B cell (primary cell): ENCODE measurements at regions of chr19 and their contacts with region 1.

Region 1: DNA sequence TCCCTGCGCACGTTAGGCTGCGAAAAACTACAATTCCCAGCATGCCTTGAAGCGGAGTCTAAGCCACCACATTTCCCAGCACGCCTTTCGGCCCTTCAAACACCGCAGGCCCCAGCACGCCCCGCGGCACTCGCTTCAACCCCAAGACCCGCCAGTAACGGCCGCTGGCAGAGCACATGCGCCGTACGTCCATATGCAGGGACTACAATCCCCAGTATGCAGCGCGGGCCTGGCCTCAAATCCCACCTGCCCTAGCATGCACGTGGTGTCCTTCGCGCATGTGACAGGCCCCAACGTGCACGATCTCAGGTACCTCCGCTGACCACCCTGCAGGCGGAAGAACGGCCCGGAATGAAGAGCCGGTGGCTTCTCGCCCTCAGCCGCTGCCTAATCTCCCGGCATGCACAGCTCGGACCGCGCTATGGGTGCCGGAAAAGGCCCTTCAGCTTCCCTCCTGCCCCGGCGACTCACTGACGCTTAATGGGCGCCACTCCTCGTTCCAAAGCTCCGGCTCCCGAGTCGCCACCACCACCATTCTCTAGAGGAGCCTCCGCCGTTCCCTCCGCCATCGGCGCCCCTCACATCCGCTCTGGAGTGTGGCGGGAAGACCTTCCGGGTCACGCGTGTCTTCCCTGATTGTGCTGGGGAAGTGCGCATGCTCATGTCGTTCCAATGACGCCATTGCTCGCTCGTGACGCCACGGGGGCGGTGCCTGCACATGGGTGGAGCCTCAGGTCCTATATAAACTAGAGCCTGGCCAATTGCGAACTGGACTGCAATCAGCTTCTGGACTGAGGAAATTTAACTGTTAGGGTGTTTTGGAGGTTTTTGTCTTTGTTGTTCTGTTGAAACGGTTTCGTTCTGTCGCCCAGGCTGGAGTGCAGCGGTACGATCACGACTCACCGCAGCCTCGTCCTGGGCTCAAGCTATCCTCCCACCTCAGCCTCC is at the start of gene DUS3L:
- DNase-seq: peak; percentile 97
- ATAC-seq: peak; percentile 92
- H3K4me3 ChIP-seq: peak within 1 kb of the TSS; percentile 67 to 91 (median 87)
- H3K4me3 Mint-ChIP-seq: peak within 1 kb of the TSS; percentile 98
- H3K27ac ChIP-seq: peak within 1 kb of the TSS; percentile 97 to 98
- H3K27ac Mint-ChIP-seq: peak within 1 kb of the TSS; percentile 100
- H3K4me1 ChIP-seq: peaks cover 5 to 16% of the 10 kb centered on the region in 2 donors
- H3K4me1 Mint-ChIP-seq: peaks cover 10% of the 10 kb centered on the region
- H3K27me3 ChIP-seq: peaks cover 0 to 6% (median 0%) of the 10 kb centered on the region in 4 experiments
- H3K27me3 Mint-ChIP-seq: no peaks in the 10 kb centered on the region
- CTCF ChIP-seq: no peak
- total RNA-seq, gene DUS3L: 79.0 and 84.6 TPM in 2 replicates

Region 2: GRCh38 chr19:5680437-5681368 is 110.1 kb before region 1 on chr19 and contains the starts of genes HSD11B1L and MICOS13:
- CTCF ChIA-PET with region 1: interaction called, 3 read pairs
- POLR2A ChIA-PET with region 1: interaction called, 3 read pairs
- intact Hi-C with region 1: loop called (anchors 1 kb)
- DNase-seq: peak; percentile 100
- ATAC-seq: peak; percentile 93
- H3K4me3 ChIP-seq: peak within 1 kb of the TSS; percentile 65 to 100 (median 81)
- H3K4me3 Mint-ChIP-seq: peak within 1 kb of the TSS; percentile 93
- H3K27ac ChIP-seq: peak within 1 kb of the TSS; percentile 96 to 98
- H3K27ac Mint-ChIP-seq: peak within 1 kb of the TSS; percentile 99
- H3K4me1 ChIP-seq: peaks cover 14 to 17% of the 10 kb centered on the region in 2 donors
- H3K4me1 Mint-ChIP-seq: peaks cover 25% of the 10 kb centered on the region
- H3K27me3 ChIP-seq: no peaks in the 10 kb centered on the region
- H3K27me3 Mint-ChIP-seq: no peaks in the 10 kb centered on the region
- CTCF ChIP-seq: no peak
- total RNA-seq, gene HSD11B1L: 1.4 and 1.8 TPM in 2 replicates
- total RNA-seq, gene MICOS13: 30.8 and 34.5 TPM in 2 replicates

Region 3: DNA sequence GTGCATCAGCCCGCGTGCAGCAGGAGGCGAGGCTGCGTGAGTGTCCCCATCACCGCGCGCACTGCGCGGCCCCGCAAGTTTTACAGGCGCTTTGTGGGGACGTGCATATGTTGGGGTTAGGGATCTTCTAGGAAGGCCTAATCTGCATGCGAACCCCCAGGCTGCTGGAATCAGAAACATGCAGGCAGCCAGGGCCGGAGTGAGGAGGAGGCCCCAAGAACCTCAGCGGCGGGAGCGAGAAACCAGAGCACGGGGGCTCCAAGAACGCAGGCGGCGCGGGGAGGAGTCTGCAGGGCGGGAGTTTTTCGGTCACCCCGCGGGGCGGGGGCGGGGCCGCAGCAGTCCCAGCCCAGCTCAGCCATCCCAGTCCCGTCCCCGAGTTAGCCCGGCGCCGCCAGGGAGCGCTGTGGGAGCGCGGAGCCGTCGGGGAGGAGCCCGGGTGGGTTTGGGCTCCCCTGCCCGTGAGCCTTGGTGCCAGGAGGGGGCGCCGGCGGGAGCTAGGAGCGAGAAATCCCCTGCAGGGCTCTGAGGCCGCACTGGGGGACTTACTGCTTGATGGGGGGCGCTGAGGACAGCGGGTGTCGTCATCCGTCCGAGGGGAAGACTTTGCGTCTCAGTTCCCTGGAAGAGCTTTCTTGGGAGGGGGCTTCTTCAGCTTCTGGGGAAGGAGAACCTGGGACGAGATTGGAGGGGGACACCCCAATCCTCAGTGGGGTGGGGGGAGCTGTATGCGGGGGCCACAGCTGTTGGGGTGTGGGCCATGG is 13.1 kb after region 1 on chr19:
- CTCF ChIA-PET with region 1: interaction called, 16 read pairs
- POLR2A ChIA-PET with region 1: interaction called, 5 read pairs
- intact Hi-C with region 1: loop called (anchors 1 kb)
- DNase-seq: peak; percentile 92
- ATAC-seq: peak; percentile 91
- H3K4me3 ChIP-seq: peak overlapping the region in 4 of 5 experiments; percentile 7 to 55 (median 42)
- H3K4me3 Mint-ChIP-seq: peak overlapping the region; percentile 76
- H3K27ac ChIP-seq: peak overlapping the region in 1 of 2 donors; percentile 53
- H3K27ac Mint-ChIP-seq: peak overlapping the region; percentile 50
- H3K4me1 ChIP-seq: peaks cover 20 to 27% of the 10 kb centered on the region in 2 donors
- H3K4me1 Mint-ChIP-seq: peaks cover 22% of the 10 kb centered on the region
- H3K27me3 ChIP-seq: peaks cover 0 to 66% (median 29%) of the 10 kb centered on the region in 4 experiments
- H3K27me3 Mint-ChIP-seq: peaks cover 26% of the 10 kb centered on the region
- CTCF ChIP-seq: peak; percentile 85

Region 4: DNA sequence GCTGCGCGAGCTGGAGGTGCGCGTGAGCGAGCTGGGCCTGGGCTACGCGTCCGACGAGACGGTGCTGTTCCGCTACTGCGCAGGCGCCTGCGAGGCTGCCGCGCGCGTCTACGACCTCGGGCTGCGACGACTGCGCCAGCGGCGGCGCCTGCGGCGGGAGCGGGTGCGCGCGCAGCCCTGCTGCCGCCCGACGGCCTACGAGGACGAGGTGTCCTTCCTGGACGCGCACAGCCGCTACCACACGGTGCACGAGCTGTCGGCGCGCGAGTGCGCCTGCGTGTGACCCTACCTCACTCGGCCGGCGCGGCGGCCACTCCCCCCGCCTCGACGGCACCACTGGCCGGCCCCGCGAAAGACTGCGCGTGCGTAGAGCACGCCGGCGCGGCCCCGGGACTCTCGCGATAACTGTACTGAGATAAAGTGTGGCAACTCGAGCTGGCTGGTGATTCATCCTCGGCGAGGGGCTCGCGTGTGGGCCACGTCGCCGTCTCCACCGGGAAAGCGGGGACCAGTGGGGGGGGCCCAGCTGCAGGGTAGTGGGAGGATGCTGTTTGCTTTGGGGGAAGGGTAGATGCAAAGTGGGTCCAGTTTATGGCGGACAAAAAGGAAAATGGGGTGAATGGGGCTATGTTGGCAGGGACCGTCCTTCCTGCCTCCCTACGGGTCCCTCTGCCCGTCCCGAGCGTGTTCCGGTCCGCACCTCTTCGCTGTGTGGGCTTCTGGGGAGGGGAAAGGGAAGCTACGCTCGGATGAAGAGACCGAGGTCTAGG is 37.2 kb after region 1 on chr19:
- CTCF ChIA-PET with region 1: interaction called, 6 read pairs
- POLR2A ChIA-PET with region 1: no interaction called
- intact Hi-C with region 1: loop called (anchors 1 kb)
- DNase-seq: peak; percentile 91
- ATAC-seq: peak; percentile 79
- H3K4me3 ChIP-seq: peak overlapping the region; percentile 36 to 75 (median 59)
- H3K4me3 Mint-ChIP-seq: peak overlapping the region; percentile 92
- H3K27ac ChIP-seq: peak overlapping the region; percentile 34 to 67
- H3K27ac Mint-ChIP-seq: peak overlapping the region; percentile 93
- H3K4me1 ChIP-seq: peaks cover 16 to 30% of the 10 kb centered on the region in 2 donors
- H3K4me1 Mint-ChIP-seq: peaks cover 19% of the 10 kb centered on the region
- H3K27me3 ChIP-seq: peaks cover 0 to 28% (median 7%) of the 10 kb centered on the region in 4 experiments
- H3K27me3 Mint-ChIP-seq: peaks cover 4% of the 10 kb centered on the region
- CTCF ChIP-seq: no peak

Region 5: GRCh38 chr19:5947435-5947834 is 156.6 kb after region 1 on chr19:
- CTCF ChIA-PET with region 1: no interaction called
- POLR2A ChIA-PET with region 1: no interaction called
- intact Hi-C with region 1: no loop called
- DNase-seq: no peak
- ATAC-seq: no peak
- H3K4me3 ChIP-seq: no peak overlapping the region
- H3K4me3 Mint-ChIP-seq: no peak overlapping the region
- H3K27ac ChIP-seq: no peak overlapping the region
- H3K27ac Mint-ChIP-seq: no peak overlapping the region
- H3K4me1 ChIP-seq: peaks cover 17 to 23% of the 10 kb centered on the region in 2 donors
- H3K4me1 Mint-ChIP-seq: peaks cover 46% of the 10 kb centered on the region
- H3K27me3 ChIP-seq: no peaks in the 10 kb centered on the region
- H3K27me3 Mint-ChIP-seq: no peaks in the 10 kb centered on the region
- CTCF ChIP-seq: no peak